ENCODE measurements at regions of chr1 and their contacts with region 1.

Region 1: DNA sequence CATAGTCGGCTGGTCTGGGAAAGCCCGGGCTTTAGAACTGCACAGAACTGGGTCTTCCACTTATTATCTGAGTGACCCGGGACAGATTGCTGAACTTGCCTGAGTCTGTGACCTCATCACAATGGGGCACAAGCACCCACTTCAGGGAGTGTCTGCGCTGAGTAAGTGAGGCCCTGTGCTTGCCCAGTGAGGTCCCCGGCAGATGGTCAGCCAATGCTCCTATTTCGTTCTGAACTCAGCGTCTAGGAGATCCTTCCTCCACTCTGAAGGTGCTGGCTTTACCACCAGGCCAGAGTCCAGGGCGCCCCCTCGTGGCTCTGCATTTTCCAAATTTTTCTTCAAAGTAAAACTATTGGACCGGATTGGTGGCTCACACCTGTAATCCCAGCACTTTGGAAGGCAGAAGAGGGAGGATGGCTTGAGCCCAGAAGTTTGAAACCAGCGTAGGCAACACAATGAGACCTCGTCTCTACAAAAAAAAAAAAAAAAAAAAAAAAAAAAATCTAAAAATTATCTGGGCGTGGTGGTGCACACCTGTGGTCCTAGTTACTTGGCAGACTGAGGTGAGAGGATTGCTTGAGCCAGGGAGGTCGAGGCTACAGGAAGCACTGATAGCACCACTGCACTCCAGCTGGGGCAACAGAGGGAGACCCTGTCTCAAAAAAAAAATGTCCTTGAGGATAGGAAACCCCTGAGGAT is 61.7 kb downstream of the FCRL5 start:
- DNase-seq: peak; percentile 80
- ATAC-seq: peak; percentile 83
- H3K4me3 ChIP-seq: no peak overlapping the region
- H3K27ac ChIP-seq: no peak overlapping the region
- H3K4me1 ChIP-seq: no peaks in the 10 kb centered on the region
- H3K27me3 ChIP-seq: peaks cover 9% of the 10 kb centered on the region
- CTCF ChIP-seq: peak; percentile 56

Region 2: DNA sequence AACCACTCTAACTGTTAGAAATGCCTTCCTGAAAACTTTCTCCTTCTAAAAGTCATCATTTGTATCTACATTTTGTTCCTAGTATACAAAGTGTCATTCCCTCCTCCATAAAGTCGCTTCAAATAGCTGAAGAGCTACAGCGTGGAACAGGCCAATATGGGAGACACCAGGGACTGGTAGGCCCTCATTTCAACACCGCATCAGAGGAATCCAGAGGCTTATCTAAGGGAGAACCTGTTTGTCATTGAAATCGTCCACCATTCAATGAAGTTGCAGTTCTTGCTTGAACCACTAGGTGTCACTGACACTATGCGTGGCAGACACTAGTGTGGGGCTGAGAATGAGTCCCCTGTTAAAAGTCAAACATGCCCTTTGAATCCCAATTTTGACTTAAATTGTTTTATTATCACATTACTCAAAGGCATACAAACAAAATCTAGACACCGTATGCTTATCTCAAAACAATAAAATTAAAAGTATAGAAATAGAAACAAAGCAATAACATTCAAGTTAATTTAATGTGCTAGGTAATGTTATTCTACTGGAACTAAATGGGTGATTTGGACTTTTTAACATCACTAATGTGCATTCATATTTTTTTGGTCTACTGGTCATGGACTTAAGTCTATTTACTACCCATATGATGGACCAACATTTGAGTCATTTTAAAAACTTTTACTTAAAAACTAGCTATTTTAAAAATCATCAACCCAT is 120.7 kb before region 1 on chr1:
- intact Hi-C with region 1: loop called (anchors 10 kb)
- DNase-seq: no peak
- ATAC-seq: peak; percentile 93
- H3K4me3 ChIP-seq: no peak overlapping the region
- H3K27ac ChIP-seq: no peak overlapping the region
- H3K4me1 ChIP-seq: no peaks in the 10 kb centered on the region
- H3K27me3 ChIP-seq: no peaks in the 10 kb centered on the region
- CTCF ChIP-seq: peak; percentile 95